CD8-positive, alpha-beta T cell (primary cell): ENCODE measurements at regions of chr6 and their contacts with region 1.

Region 1: GRCh38 chr6:27795697-27796494 is 116.3 kb downstream of the OR2B2 start:
- DNase-seq: peak in 5 of 9 experiments; percentile 35 to 88 (median 64)
- ATAC-seq: peak; percentile 75
- H3K4me3 ChIP-seq: no peak overlapping the region
- H3K4me3 Mint-ChIP-seq: no peak overlapping the region
- H3K27ac ChIP-seq: no peak overlapping the region
- H3K27ac Mint-ChIP-seq: peak overlapping the region; percentile 11
- H3K4me1 ChIP-seq: peaks cover 17% of the 10 kb centered on the region
- H3K4me1 Mint-ChIP-seq: peaks cover 22% of the 10 kb centered on the region
- H3K27me3 ChIP-seq: peaks cover 0 to 5% of the 10 kb centered on the region in 2 experiments
- H3K27me3 Mint-ChIP-seq: peaks cover 7% of the 10 kb centered on the region
- CTCF ChIP-seq: peak; percentile 80

Region 2: DNA sequence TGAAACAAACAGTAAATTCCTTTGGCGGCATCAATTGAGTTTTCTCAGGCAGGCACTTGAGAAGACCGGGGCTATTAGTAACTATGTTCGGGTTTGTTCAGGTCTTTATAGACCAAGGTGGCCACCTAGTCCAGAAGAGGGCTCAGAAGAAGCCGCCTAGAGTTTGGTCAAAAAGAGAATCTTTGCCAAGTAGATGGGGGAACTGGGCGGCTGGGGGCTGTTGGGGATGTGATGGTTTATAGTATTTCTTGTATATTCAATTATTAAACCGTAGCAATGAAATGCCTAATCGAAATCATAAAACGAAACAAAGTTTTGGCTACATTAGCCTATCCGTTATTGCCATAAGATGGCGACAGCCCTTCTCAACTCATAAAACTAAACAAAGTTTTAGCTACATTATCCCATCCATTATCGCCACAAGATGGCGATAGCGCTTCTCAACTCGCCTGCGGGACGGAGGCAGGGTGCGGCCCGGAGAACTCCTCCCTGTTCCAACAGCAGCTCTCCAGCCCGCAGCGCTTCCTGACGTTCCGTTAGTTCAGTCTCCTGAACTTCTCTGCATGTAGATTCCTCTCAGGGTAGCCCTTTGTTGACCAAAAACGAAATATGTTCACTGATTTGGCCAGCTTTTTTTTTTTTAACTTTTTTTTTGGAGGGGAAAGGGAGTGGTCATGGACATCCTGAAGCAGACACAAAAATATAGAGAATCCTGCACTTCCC is 668.9 kb before region 1 on chr6:
- CTCF ChIA-PET with region 1: interaction called, 4 read pairs
- POLR2A ChIA-PET with region 1: interaction called, 3 read pairs
- intact Hi-C with region 1: loop called in 1 of 2 experiments (anchors 1 kb)
- DNase-seq: peak; percentile 62 to 94 (median 81)
- ATAC-seq: peak; percentile 75
- H3K4me3 ChIP-seq: peak overlapping the region; percentile 24 to 31
- H3K4me3 Mint-ChIP-seq: peak overlapping the region; percentile 71
- H3K27ac ChIP-seq: peak overlapping the region in 1 of 2 experiments; percentile 52
- H3K27ac Mint-ChIP-seq: peak overlapping the region; percentile 77
- H3K4me1 ChIP-seq: peaks cover 14% of the 10 kb centered on the region
- H3K4me1 Mint-ChIP-seq: peaks cover 16% of the 10 kb centered on the region
- H3K27me3 ChIP-seq: no peaks in the 10 kb centered on the region
- H3K27me3 Mint-ChIP-seq: no peaks in the 10 kb centered on the region
- CTCF ChIP-seq: peak; percentile 95

Region 3: GRCh38 chr6:27188885-27189418 is 606.9 kb before region 1 on chr6:
- CTCF ChIA-PET with region 1: interaction called, 6 read pairs
- POLR2A ChIA-PET with region 1: no interaction called
- intact Hi-C with region 1: loop called in 1 of 2 experiments (anchors 1 kb)
- DNase-seq: peak in 8 of 9 experiments; percentile 24 to 86 (median 50)
- ATAC-seq: peak; percentile 77
- H3K4me3 ChIP-seq: peak overlapping the region; percentile 58 to 62
- H3K4me3 Mint-ChIP-seq: peak overlapping the region; percentile 87
- H3K27ac ChIP-seq: peak overlapping the region in 1 of 2 experiments; percentile 33
- H3K27ac Mint-ChIP-seq: no peak overlapping the region
- H3K4me1 ChIP-seq: peaks cover 4% of the 10 kb centered on the region
- H3K4me1 Mint-ChIP-seq: peaks cover 10% of the 10 kb centered on the region
- H3K27me3 ChIP-seq: no peaks in the 10 kb centered on the region
- H3K27me3 Mint-ChIP-seq: no peaks in the 10 kb centered on the region
- CTCF ChIP-seq: peak; percentile 66

Region 4: GRCh38 chr6:27518881-27519795 is 276.8 kb before region 1 on chr6:
- CTCF ChIA-PET with region 1: interaction called, 4 read pairs
- POLR2A ChIA-PET with region 1: no interaction called
- intact Hi-C with region 1: loop called in 1 of 2 experiments (anchors 5 kb)
- DNase-seq: peak; percentile 29 to 88 (median 61)
- ATAC-seq: peak; percentile 78
- H3K4me3 ChIP-seq: peak overlapping the region; percentile 74 to 88
- H3K4me3 Mint-ChIP-seq: peak overlapping the region; percentile 83
- H3K27ac ChIP-seq: peak overlapping the region; percentile 59 to 72
- H3K27ac Mint-ChIP-seq: peak overlapping the region; percentile 83
- H3K4me1 ChIP-seq: peaks cover 10% of the 10 kb centered on the region
- H3K4me1 Mint-ChIP-seq: peaks cover 19% of the 10 kb centered on the region
- H3K27me3 ChIP-seq: peaks cover 0 to 9% of the 10 kb centered on the region in 2 experiments
- H3K27me3 Mint-ChIP-seq: peaks cover 18% of the 10 kb centered on the region
- CTCF ChIP-seq: peak; percentile 77

Region 5: DNA sequence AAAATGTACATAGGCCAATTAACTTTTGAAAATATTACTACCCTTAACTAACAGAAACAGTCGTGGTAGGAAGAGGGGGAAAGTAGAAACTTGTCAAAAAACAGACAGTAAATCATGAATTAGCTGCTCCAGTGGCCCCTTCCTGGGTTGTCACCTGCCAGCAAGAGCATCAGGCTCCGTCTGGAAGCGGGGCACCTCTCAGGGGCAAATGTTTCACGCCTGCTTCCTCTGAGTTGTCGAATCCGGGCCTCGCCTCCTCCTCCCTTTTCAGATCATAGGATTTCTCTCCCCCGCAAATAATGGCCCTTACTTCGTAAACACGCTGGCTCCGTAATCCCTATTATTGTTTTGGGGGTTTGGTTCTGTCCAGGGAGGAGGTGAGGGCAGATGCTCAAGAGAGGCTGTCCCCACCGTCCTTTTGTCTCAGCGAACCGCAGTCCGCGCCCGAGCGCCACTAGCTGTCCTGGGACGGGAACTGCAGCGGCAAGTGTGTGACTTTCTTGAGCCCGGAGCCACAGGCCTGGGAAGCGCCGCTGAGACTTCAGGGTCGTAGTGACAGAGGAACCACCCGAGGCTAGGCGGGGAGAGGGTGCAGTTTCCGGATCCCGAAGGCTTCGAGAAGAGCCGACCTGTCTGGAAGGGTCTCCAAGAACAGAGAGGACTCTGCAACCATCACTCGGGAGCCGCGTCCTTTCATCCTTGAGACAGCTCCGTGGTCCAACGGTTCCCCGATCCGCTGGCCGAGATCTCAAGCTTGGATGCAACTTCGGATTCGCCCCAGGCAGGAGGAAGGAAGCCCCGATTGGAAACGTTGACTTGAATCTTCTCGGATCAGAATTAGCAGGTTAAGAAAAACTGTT is 108.5 kb before region 1 on chr6:
- CTCF ChIA-PET with region 1: no interaction called
- POLR2A ChIA-PET with region 1: no interaction called
- intact Hi-C with region 1: no loop called
- DNase-seq: peak; percentile 58 to 88 (median 74)
- ATAC-seq: peak; percentile 72
- H3K4me3 ChIP-seq: peak overlapping the region; percentile 60 to 74
- H3K4me3 Mint-ChIP-seq: peak overlapping the region; percentile 94
- H3K27ac ChIP-seq: peak overlapping the region; percentile 15 to 55
- H3K27ac Mint-ChIP-seq: peak overlapping the region; percentile 93
- H3K4me1 ChIP-seq: peaks cover 3% of the 10 kb centered on the region
- H3K4me1 Mint-ChIP-seq: peaks cover 18% of the 10 kb centered on the region
- H3K27me3 ChIP-seq: no peaks in the 10 kb centered on the region
- H3K27me3 Mint-ChIP-seq: peaks cover 6% of the 10 kb centered on the region
- CTCF ChIP-seq: peak; percentile 67

Region 6: DNA sequence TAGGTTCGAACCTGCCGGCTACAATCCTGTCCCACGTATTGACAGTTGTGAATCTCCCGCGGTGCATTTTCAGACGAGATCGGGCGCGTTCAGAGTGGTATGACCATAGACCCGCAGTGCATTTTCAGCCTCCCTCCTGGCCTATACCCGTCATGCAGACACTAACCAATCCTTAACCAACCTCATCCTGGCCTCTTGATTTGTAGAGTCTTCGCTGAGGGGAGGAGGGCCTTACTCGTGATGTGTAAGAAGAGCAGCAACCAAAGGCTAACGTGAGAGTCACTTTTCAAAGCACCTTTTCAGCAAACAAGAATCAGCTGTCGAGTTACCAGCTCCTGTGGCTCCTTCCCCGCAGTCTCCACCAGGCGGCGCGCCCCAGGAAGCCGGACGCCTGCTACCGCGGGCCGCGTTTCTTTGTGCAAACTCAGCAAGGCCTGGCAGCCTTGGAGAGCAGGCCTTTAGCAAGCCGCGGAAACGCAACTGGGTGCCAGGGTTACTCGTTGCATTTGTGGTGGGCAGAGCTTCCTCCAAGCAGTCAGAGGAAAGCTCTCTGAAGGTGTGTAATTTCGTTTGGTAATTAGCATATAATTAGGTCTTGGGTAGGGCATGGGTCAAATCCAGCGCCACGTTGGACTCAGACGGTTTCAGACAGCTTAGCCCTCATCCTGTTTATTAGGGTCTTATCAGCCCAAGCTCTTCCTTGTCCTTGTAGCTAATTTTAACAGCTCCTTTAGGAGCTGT is 23.5 kb before region 1 on chr6:
- CTCF ChIA-PET with region 1: interaction called, 38 read pairs
- POLR2A ChIA-PET with region 1: interaction called, 4 read pairs
- intact Hi-C with region 1: loop called (anchors 1 kb)
- DNase-seq: peak; percentile 76 to 92 (median 84)
- ATAC-seq: peak; percentile 96
- H3K4me3 ChIP-seq: no peak overlapping the region
- H3K4me3 Mint-ChIP-seq: no peak overlapping the region
- H3K27ac ChIP-seq: peak overlapping the region in 1 of 2 experiments; percentile 8
- H3K27ac Mint-ChIP-seq: peak overlapping the region; percentile 56
- H3K4me1 ChIP-seq: peaks cover 11% of the 10 kb centered on the region
- H3K4me1 Mint-ChIP-seq: peaks cover 11% of the 10 kb centered on the region
- H3K27me3 ChIP-seq: no peaks in the 10 kb centered on the region
- H3K27me3 Mint-ChIP-seq: peaks cover 11% of the 10 kb centered on the region
- CTCF ChIP-seq: peak; percentile 85

Region 7: DNA sequence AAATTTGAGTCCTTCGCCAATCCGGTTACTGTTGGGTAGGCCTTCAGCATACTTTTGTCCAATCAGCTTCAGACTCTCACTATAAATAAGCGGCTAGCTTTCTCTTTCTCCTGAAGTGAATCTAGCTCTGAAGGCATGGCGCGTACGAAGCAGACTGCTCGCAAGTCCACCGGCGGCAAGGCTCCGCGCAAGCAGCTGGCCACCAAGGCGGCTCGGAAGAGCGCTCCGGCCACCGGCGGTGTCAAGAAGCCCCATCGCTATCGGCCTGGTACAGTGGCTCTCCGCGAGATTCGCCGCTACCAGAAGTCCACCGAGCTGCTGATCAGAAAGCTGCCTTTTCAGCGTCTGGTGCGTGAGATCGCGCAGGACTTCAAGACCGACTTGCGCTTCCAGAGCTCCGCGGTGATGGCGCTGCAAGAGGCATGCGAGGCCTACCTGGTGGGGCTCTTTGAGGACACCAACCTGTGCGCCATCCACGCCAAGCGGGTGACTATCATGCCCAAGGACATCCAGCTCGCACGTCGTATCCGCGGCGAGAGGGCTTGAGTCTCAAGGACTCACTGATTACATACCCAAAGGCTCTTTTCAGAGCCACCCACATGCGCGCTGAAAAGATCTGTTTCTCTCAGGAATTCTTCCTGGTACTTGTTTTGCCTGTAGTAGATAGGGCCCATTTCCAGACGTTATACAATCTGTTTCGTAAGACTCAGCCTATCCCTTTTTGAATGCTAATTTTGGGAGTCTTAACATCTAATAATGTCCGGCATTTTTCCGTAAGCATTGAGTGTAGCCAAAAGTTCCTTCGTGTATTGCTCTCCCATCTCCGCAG is 14.3 kb after region 1 on chr6:
- CTCF ChIA-PET with region 1: interaction called, 3 read pairs
- POLR2A ChIA-PET with region 1: interaction called, 41 read pairs
- intact Hi-C with region 1: loop called in 1 of 2 experiments (anchors 1 kb)
- DNase-seq: peak; percentile 63 to 96 (median 74)
- ATAC-seq: peak; percentile 60
- H3K4me3 ChIP-seq: peak overlapping the region; percentile 52 to 65
- H3K4me3 Mint-ChIP-seq: peak overlapping the region; percentile 95
- H3K27ac ChIP-seq: peak overlapping the region; percentile 83 to 87
- H3K27ac Mint-ChIP-seq: peak overlapping the region; percentile 99
- H3K4me1 ChIP-seq: peaks cover 36% of the 10 kb centered on the region
- H3K4me1 Mint-ChIP-seq: peaks cover 57% of the 10 kb centered on the region
- H3K27me3 ChIP-seq: no peaks in the 10 kb centered on the region
- H3K27me3 Mint-ChIP-seq: no peaks in the 10 kb centered on the region
- CTCF ChIP-seq: no peak

Region 8: DNA sequence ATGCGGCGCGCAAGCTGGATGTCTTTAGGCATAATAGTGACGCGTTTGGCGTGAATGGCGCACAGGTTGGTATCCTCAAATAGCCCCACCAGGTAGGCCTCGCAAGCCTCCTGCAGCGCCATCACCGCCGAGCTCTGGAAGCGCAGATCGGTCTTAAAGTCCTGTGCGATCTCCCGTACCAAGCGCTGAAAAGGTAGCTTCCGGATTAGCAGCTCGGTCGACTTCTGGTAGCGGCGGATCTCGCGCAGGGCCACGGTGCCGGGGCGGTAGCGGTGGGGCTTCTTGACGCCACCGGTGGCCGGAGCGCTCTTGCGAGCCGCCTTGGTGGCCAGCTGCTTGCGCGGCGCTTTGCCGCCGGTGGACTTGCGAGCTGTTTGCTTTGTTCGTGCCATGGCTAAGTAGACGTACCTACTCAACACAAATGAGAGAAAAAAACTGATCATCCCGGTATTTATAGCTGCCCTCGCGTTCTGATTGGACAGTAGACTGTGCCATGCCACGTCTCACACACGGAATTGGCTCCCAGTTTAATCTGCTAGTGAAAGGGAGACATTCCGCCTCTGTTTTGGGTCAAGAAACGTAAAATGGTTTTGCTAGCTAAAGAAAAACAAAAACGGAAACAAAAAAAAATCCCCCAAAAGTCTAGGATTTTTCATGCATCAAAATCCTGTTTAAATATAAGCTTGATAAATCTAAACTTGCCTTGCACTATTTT is 76.2 kb after region 1 on chr6:
- CTCF ChIA-PET with region 1: interaction called, 4 read pairs
- POLR2A ChIA-PET with region 1: interaction called, 17 read pairs
- intact Hi-C with region 1: no loop called
- DNase-seq: peak; percentile 72 to 97 (median 85)
- ATAC-seq: peak; percentile 75
- H3K4me3 ChIP-seq: peak overlapping the region; percentile 54 to 67
- H3K4me3 Mint-ChIP-seq: peak overlapping the region; percentile 82
- H3K27ac ChIP-seq: peak overlapping the region; percentile 81 to 86
- H3K27ac Mint-ChIP-seq: peak overlapping the region; percentile 98
- H3K4me1 ChIP-seq: peaks cover 20% of the 10 kb centered on the region
- H3K4me1 Mint-ChIP-seq: peaks cover 36% of the 10 kb centered on the region
- H3K27me3 ChIP-seq: peaks cover 0 to 3% of the 10 kb centered on the region in 2 experiments
- H3K27me3 Mint-ChIP-seq: no peaks in the 10 kb centered on the region
- CTCF ChIP-seq: peak; percentile 48